PC-9 (cell line): ENCODE measurements at regions of chr18 and their contacts with region 1.

Region 1: GRCh38 chr18:13530879-13531387 is 195.4 kb downstream of the FAM210A start:
- DNase-seq: peak in 1 of 2 experiments; percentile 36
- H3K4me3 ChIP-seq: no peak overlapping the region
- H3K27ac ChIP-seq: no peak overlapping the region
- H3K4me1 ChIP-seq: no peaks in the 10 kb centered on the region
- H3K27me3 ChIP-seq: peaks cover 91% of the 10 kb centered on the region
- CTCF ChIP-seq: no peak

Region 2: GRCh38 chr18:13166023-13166422 is 364.9 kb before region 1 on chr18:
- CTCF ChIA-PET with region 1: no interaction called
- POLR2A ChIA-PET with region 1: no interaction called
- intact Hi-C with region 1: loop called (anchors 10 kb)
- DNase-seq: no peak
- H3K4me3 ChIP-seq: no peak overlapping the region
- H3K27ac ChIP-seq: no peak overlapping the region
- H3K4me1 ChIP-seq: no peaks in the 10 kb centered on the region
- H3K27me3 ChIP-seq: peaks cover 23% of the 10 kb centered on the region
- CTCF ChIP-seq: no peak

Region 3: DNA sequence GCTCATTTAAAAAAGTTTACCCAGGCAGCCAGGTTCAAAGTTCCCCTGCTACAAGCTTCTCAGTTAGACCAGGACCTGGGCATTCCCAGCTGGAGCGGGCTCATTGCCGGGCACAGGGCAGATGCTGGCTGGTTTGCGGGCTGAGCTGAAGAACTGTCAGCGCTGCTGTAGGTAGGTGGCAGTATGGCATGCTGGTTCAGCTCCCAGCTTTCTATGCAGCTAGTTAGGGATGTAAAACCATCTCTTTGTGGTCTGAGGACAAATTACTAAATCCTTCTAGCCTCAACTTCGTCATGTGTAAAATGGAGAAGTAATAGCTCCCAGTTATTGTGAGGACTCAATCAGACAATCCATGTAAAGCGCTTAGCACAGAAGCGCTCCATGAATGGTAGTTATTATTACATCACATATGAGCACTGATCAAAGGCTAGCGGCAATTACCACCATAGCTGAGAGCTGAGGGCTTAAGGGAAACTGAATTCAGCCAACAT is 314.8 kb before region 1 on chr18:
- CTCF ChIA-PET with region 1: interaction called, 13 read pairs
- POLR2A ChIA-PET with region 1: no interaction called
- intact Hi-C with region 1: loop called (anchors 1 kb)
- DNase-seq: peak in 1 of 2 experiments; percentile 51
- H3K4me3 ChIP-seq: no peak overlapping the region
- H3K27ac ChIP-seq: no peak overlapping the region
- H3K4me1 ChIP-seq: no peaks in the 10 kb centered on the region
- H3K27me3 ChIP-seq: peaks cover 66% of the 10 kb centered on the region
- CTCF ChIP-seq: no peak; the same call in 1 of the 2 replicates

Region 4: DNA sequence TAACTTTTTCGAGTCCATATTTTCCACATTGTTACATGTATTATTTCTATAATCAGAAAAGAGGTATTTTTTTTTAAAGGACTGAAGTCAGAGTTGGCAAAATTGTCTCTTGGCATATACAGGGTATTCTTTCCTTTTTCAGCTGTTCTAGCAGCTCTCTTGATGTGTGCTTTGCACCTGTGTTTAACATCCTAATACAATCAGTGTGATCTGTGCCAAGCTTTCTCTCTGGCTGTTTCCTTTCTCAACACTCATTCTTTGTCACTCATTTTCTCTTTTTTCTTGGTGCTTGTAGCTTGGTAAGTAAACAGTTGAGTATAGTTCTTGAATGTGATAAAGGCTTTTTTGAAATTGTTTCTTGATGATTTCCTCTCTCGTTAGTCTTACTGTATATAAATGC is 204.7 kb after region 1 on chr18:
- CTCF ChIA-PET with region 1: no interaction called
- POLR2A ChIA-PET with region 1: no interaction called
- intact Hi-C with region 1: no loop called
- DNase-seq: no peak
- H3K4me3 ChIP-seq: no peak overlapping the region
- H3K27ac ChIP-seq: no peak overlapping the region
- H3K4me1 ChIP-seq: no peaks in the 10 kb centered on the region
- H3K27me3 ChIP-seq: no peaks in the 10 kb centered on the region
- CTCF ChIP-seq: no peak